AG04450 (cell line): ENCODE measurements at regions of chr20 and their contacts with region 1.

Region 1: DNA sequence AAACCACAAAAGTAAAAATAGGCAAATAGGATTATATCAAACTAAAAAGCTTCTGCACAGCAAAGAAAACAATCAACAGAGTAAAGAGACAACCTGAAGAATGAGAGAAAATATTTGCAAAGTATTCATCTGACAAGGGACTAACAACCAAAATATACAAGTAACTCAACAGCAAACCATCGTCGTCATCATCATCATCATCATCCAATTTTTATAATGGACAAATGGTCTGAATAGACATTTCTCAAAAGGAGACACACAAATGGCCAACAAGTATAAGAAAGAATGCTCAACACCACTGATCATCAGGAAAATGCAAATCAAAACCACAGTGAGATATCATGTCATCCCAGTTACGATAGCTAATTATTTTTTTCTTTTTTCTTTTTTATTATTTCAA is 62.0 kb downstream of the ANKEF1 start:
- DNase-seq: no peak
- H3K4me3 ChIP-seq: no peak overlapping the region
- H3K27ac ChIP-seq: no peak overlapping the region
- H3K27me3 ChIP-seq: no peaks in the 10 kb centered on the region
- CTCF ChIP-seq: no peak

Region 2: GRCh38 chr20:9570612-9571011 is 526.2 kb before region 1 on chr20:
- CTCF ChIA-PET with region 1: interaction called, 10 read pairs
- POLR2A ChIA-PET with region 1: no interaction called
- DNase-seq: no peak
- H3K4me3 ChIP-seq: no peak overlapping the region
- H3K27ac ChIP-seq: no peak overlapping the region
- H3K27me3 ChIP-seq: peaks cover 7% of the 10 kb centered on the region
- CTCF ChIP-seq: no peak